ENCODE measurements at regions of chr1 and their contacts with region 1.

Region 1: GRCh38 chr1:100921109-100921706 is 25.3 kb downstream of the SLC30A7 start:
- DNase-seq: no peak
- H3K4me3 ChIP-seq: no peak overlapping the region
- H3K27ac ChIP-seq: no peak overlapping the region
- H3K4me1 ChIP-seq: no peaks in the 10 kb centered on the region
- H3K27me3 ChIP-seq: no peaks in the 10 kb centered on the region
- CTCF ChIP-seq: peak; percentile 62 to 76 (median 67)
- EP300 ChIP-seq: no peak
- POLR2A ChIP-seq: no peak

Region 2: DNA sequence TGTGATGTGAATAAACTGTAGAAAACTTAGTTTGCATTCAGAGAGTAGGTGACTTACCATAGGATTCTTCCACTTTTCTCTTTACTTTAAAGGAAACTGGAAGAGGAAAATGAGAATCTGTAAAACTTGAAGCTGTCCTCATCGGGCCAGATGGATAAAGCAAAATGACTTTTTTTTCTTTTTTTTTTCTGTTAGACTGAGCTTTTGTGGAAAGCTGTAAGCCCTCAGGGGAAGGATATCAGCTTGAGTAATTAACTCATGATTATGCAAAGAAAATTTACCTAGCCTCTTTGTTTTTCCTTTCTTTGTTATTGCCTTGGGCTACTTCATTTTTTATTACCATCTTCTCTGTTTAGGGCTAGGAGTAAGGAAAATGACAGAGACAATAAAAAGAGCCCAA is 51.0 kb after region 1 on chr1:
- in situ Hi-C with region 1: no loop called
- intact Hi-C with region 1: no loop called
- DNase-seq: no peak
- H3K4me3 ChIP-seq: no peak overlapping the region
- H3K27ac ChIP-seq: no peak overlapping the region
- H3K4me1 ChIP-seq: no peaks in the 10 kb centered on the region
- H3K27me3 ChIP-seq: no peaks in the 10 kb centered on the region
- CTCF ChIP-seq: no peak
- EP300 ChIP-seq: no peak
- POLR2A ChIP-seq: no peak

Region 3: GRCh38 chr1:101238681-101239094 is 317.5 kb after region 1 on chr1:
- in situ Hi-C with region 1: no loop called
- intact Hi-C with region 1: loop called (anchors 5 kb)
- DNase-seq: peak; percentile 81
- H3K4me3 ChIP-seq: peak overlapping the region in 2 of 4 donors; percentile 41 to 69
- H3K27ac ChIP-seq: peak overlapping the region; percentile 5 to 31 (median 12)
- H3K4me1 ChIP-seq: peaks cover 6 to 31% (median 25%) of the 10 kb centered on the region in 4 donors
- H3K27me3 ChIP-seq: peaks cover 50% of the 10 kb centered on the region
- CTCF ChIP-seq: peak; percentile 83 to 94 (median 87)
- EP300 ChIP-seq: no peak
- POLR2A ChIP-seq: no peak

Region 4: GRCh38 chr1:101288491-101288944 is 367.3 kb after region 1 on chr1:
- in situ Hi-C with region 1: loop called (anchors 5 to 25 kb)
- intact Hi-C with region 1: loop called (anchors 5 kb)
- DNase-seq: peak; percentile 68
- H3K4me3 ChIP-seq: no peak overlapping the region
- H3K27ac ChIP-seq: no peak overlapping the region
- H3K4me1 ChIP-seq: peaks cover 0 to 11% (median 0%) of the 10 kb centered on the region in 4 donors
- H3K27me3 ChIP-seq: no peaks in the 10 kb centered on the region
- CTCF ChIP-seq: peak; percentile 85 to 93 (median 88)
- EP300 ChIP-seq: no peak
- POLR2A ChIP-seq: no peak

Region 5: GRCh38 chr1:101325144-101325543 is 403.9 kb after region 1 on chr1:
- in situ Hi-C with region 1: no loop called
- intact Hi-C with region 1: no loop called
- DNase-seq: no peak
- H3K4me3 ChIP-seq: no peak overlapping the region
- H3K27ac ChIP-seq: no peak overlapping the region
- H3K4me1 ChIP-seq: no peaks in the 10 kb centered on the region
- H3K27me3 ChIP-seq: no peaks in the 10 kb centered on the region
- CTCF ChIP-seq: no peak
- EP300 ChIP-seq: no peak
- POLR2A ChIP-seq: no peak

Measured in transverse colon (tissue), 4 donors.